ENCODE measurements at regions of chr6 and their contacts with region 1.

Region 1: DNA sequence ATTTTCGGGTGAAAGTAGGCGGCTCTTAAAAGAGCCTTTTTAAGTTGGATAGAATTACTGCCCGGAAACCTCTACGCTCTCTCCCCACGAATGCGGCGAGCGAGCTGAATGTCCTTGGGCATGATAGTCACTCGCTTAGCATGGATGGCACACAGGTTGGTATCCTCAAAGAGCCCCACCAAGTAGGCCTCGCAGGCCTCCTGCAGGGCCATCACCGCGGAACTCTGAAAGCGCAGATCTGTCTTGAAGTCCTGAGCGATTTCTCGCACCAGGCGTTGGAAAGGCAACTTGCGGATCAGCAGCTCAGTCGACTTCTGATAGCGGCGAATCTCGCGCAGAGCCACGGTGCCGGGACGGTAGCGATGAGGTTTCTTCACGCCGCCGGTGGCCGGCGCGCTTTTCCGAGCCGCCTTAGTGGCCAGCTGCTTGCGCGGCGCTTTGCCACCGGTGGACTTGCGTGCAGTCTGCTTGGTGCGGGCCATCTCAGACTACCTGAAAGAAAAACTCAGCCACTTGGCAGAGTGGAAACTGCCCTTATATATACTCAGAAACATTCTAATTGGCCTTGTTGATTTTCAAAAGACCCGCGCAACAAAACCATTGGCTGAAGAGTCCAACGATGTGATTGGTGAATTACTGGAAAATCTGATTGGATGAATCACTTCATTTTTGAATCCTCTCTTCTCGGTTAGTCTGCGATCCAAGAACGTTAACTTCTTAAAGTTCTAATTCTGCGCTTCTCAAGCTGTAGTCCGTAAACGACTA is 93.9 kb upstream of the BTN3A2 start:
- DNase-seq: peak; percentile 80
- H3K4me3 Mint-ChIP-seq: no peak overlapping the region
- H3K27ac Mint-ChIP-seq: no peak overlapping the region
- H3K4me1 Mint-ChIP-seq: peaks cover 45% of the 10 kb centered on the region
- H3K27me3 Mint-ChIP-seq: no peaks in the 10 kb centered on the region

Region 2: GRCh38 chr6:26054857-26055669 is 216.0 kb before region 1 on chr6:
- intact Hi-C with region 1: loop called (anchors 5 kb)
- DNase-seq: peak; percentile 83
- H3K4me3 Mint-ChIP-seq: peak overlapping the region; percentile 91
- H3K27ac Mint-ChIP-seq: peak overlapping the region; percentile 99
- H3K4me1 Mint-ChIP-seq: peaks cover 42% of the 10 kb centered on the region
- H3K27me3 Mint-ChIP-seq: peaks cover 3% of the 10 kb centered on the region

Region 3: GRCh38 chr6:26175428-26176181 is 95.5 kb before region 1 on chr6:
- intact Hi-C with region 1: loop called (anchors 1 kb)
- DNase-seq: peak; percentile 58
- H3K4me3 Mint-ChIP-seq: peak overlapping the region; percentile 19
- H3K27ac Mint-ChIP-seq: peak overlapping the region; percentile 79
- H3K4me1 Mint-ChIP-seq: peaks cover 51% of the 10 kb centered on the region
- H3K27me3 Mint-ChIP-seq: no peaks in the 10 kb centered on the region

Region 4: GRCh38 chr6:26216356-26216885 is 54.7 kb before region 1 on chr6:
- intact Hi-C with region 1: loop called (anchors 2 kb)
- DNase-seq: peak; percentile 86
- H3K4me3 Mint-ChIP-seq: no peak overlapping the region
- H3K27ac Mint-ChIP-seq: no peak overlapping the region
- H3K4me1 Mint-ChIP-seq: peaks cover 11% of the 10 kb centered on the region
- H3K27me3 Mint-ChIP-seq: no peaks in the 10 kb centered on the region

Region 5: GRCh38 chr6:26249957-26250697 is 21.0 kb before region 1 on chr6:
- intact Hi-C with region 1: loop called (anchors 1 kb)
- DNase-seq: peak; percentile 68
- H3K4me3 Mint-ChIP-seq: peak overlapping the region; percentile 90
- H3K27ac Mint-ChIP-seq: peak overlapping the region; percentile 99
- H3K4me1 Mint-ChIP-seq: peaks cover 55% of the 10 kb centered on the region
- H3K27me3 Mint-ChIP-seq: peaks cover 2% of the 10 kb centered on the region

Region 6: GRCh38 chr6:26401987-26402658 is 131.0 kb after region 1 on chr6 and contains the start of gene BTN3A1:
- intact Hi-C with region 1: loop called (anchors 5 kb)
- DNase-seq: peak; percentile 61
- H3K4me3 Mint-ChIP-seq: peak within 1 kb of the TSS; percentile 94
- H3K27ac Mint-ChIP-seq: peak within 1 kb of the TSS; percentile 97
- H3K4me1 Mint-ChIP-seq: peaks cover 56% of the 10 kb centered on the region
- H3K27me3 Mint-ChIP-seq: no peaks in the 10 kb centered on the region
- total RNA-seq, gene BTN3A1: 28.2 and 30.6 TPM in 2 replicates

Region 7: DNA sequence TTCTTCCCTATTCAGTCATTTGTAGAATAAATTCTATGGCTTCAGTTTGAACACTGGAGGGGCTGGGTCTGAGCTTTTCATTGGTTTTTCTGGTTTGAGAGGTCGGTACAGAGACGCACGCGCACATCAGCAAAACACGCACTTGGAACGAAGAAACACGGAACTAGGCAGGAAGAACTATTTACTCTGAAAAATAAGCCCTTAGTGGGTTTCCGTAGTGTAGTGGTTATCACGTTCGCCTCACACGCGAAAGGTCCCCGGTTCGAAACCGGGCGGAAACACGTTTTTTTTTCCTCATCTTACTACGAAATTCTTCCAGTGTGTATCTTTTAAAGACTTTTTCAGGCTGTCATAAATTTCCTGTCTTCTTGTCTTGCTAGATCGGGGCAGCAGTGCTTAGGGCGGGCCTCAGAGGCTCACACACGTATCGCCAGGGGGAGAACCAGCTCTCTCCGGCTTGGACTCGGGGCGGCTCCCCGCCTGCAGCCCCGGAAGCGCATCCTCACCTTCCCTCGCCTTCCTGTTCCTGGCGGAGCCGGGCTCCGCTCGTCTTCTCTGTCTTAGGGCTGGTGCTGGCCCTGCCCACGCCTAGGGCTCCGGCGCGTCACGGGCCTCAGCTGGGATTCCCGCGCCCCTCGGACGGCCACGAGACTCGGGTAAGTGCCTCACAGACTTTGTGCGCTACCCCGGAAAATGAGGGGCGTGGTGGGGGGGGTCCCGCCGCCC is 266.9 kb after region 1 on chr6 and contains the start of gene HMGN4:
- intact Hi-C with region 1: no loop called
- DNase-seq: peak; percentile 80
- H3K4me3 Mint-ChIP-seq: peak within 1 kb of the TSS; percentile 91
- H3K27ac Mint-ChIP-seq: peak within 1 kb of the TSS; percentile 96
- H3K4me1 Mint-ChIP-seq: peaks cover 60% of the 10 kb centered on the region
- H3K27me3 Mint-ChIP-seq: peaks cover 3% of the 10 kb centered on the region
- total RNA-seq, gene HMGN4: 77.6 and 86.8 TPM in 2 replicates

Region 8: GRCh38 chr6:27864906-27865849 is 1594.1 kb after region 1 on chr6:
- intact Hi-C with region 1: loop called (anchors 5 kb)
- DNase-seq: peak; percentile 80
- H3K4me3 Mint-ChIP-seq: peak overlapping the region; percentile 99
- H3K27ac Mint-ChIP-seq: peak overlapping the region; percentile 99
- H3K4me1 Mint-ChIP-seq: peaks cover 71% of the 10 kb centered on the region
- H3K27me3 Mint-ChIP-seq: peaks cover 4% of the 10 kb centered on the region